Psoas muscle (tissue), 8 donors: ENCODE measurements at regions of chr15 and their contacts with region 1.

Region 1: GRCh38 chr15:33874156-33874555 is 94.1 kb upstream of the CHRM5 start:
- DNase-seq: no peak
- ATAC-seq: no peak
- H3K4me3 ChIP-seq: no peak overlapping the region
- H3K27ac ChIP-seq: no peak overlapping the region
- H3K4me1 ChIP-seq: no peaks in the 10 kb centered on the region
- H3K27me3 ChIP-seq: no peaks in the 10 kb centered on the region
- CTCF ChIP-seq: no peak

Region 2: GRCh38 chr15:33894193-33894592 is 20.0 kb after region 1 on chr15:
- intact Hi-C with region 1: loop called in 1 of 2 experiments (anchors 1 kb)
- DNase-seq: no peak
- ATAC-seq: no peak
- H3K4me3 ChIP-seq: no peak overlapping the region
- H3K27ac ChIP-seq: no peak overlapping the region
- H3K4me1 ChIP-seq: no peaks in the 10 kb centered on the region
- H3K27me3 ChIP-seq: no peaks in the 10 kb centered on the region
- CTCF ChIP-seq: no peak

Region 3: DNA sequence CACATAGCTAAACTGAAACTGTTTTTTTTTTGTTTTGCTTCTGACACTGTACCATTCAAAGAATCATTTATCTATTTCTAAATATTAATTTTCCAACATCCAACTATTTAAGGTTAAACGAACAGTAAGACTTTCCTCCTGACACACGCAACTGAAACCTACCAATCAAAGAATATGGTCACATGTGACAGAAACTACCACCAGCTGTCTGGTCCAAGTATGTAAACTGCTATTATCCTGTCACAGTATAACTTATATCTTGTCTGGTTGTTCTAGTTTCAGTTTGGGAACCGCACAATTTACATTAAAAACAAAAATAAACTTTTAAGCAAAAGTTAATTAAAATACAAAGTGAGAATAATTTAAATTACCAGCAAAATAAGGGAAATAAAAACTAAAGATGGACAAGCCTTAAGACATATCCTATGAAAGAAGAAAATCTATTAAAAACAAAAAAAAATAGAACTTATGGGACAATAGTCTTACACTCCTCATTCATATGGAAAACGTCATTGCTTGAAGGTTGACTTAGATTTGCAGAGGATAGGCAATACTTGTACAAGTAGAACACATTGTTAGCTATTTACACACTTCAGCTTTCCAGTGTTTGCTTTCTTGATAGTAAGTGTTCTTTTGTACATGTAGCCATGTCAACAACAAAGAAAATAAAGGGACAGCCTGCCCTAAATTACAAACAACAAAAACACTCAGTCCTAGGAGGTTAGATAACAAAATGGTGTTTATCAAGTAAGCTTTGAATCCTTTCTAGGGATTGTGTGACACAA is 67.3 kb after region 1 on chr15:
- intact Hi-C with region 1: no loop called
- DNase-seq: no peak
- ATAC-seq: no peak
- H3K4me3 ChIP-seq: no peak overlapping the region
- H3K27ac ChIP-seq: no peak overlapping the region
- H3K4me1 ChIP-seq: no peaks in the 10 kb centered on the region
- H3K27me3 ChIP-seq: no peaks in the 10 kb centered on the region
- CTCF ChIP-seq: no peak

Region 4: GRCh38 chr15:34038023-34038870 is 164.1 kb after region 1 on chr15:
- intact Hi-C with region 1: no loop called
- DNase-seq: peak; percentile 88 to 91
- ATAC-seq: peak; percentile 92 to 97 (median 95)
- H3K4me3 ChIP-seq: peak overlapping the region; percentile 84
- H3K27ac ChIP-seq: peak overlapping the region; percentile 91
- H3K4me1 ChIP-seq: peaks cover 7% of the 10 kb centered on the region
- H3K27me3 ChIP-seq: no peaks in the 10 kb centered on the region
- CTCF ChIP-seq: no peak